Activated CD8-positive, alpha-beta memory T cell treated with anti-CD3 and anti-CD28 coated beads, Interleukin-2, amount 10 ng/mL, durations not matched to agents 7 days and 5 days (primary cell): ENCODE measurements at regions of chr4 and their contacts with region 1.

Region 1: GRCh38 chr4:47531241-47531953 is 46.3 kb downstream of the ATP10D start:
- DNase-seq: peak; percentile 90
- ATAC-seq: peak; percentile 95
- H3K4me3 Mint-ChIP-seq: peak overlapping the region; percentile 46
- H3K27ac Mint-ChIP-seq: peak overlapping the region; percentile 94
- H3K4me1 Mint-ChIP-seq: peaks cover 70% of the 10 kb centered on the region
- H3K27me3 Mint-ChIP-seq: no peaks in the 10 kb centered on the region

Region 2: GRCh38 chr4:47562297-47562696 is 30.9 kb after region 1 on chr4:
- CTCF ChIA-PET with region 1: interaction called, 14 read pairs
- DNase-seq: no peak
- ATAC-seq: no peak
- H3K4me3 Mint-ChIP-seq: no peak overlapping the region
- H3K27ac Mint-ChIP-seq: no peak overlapping the region
- H3K4me1 Mint-ChIP-seq: peaks cover 19% of the 10 kb centered on the region
- H3K27me3 Mint-ChIP-seq: no peaks in the 10 kb centered on the region